Stomach (tissue), 19 donors: ENCODE measurements at regions of chr20 and their contacts with region 1.

Region 1: GRCh38 chr20:32779500-32780211 is 17.5 kb downstream of the DNMT3B start:
- DNase-seq: no peak
- H3K4me3 ChIP-seq: no peak overlapping the region
- H3K27ac ChIP-seq: no peak overlapping the region
- H3K4me1 ChIP-seq: peaks cover 8 to 16% (median 12%) of the 10 kb centered on the region in 4 donors
- H3K27me3 ChIP-seq: no peaks in the 10 kb centered on the region
- CTCF ChIP-seq: no peak
- EP300 ChIP-seq: no peak
- POLR2A ChIP-seq: no peak

Region 2: GRCh38 chr20:32674362-32674789 is 105.3 kb before region 1 on chr20:
- intact Hi-C with region 1: loop called (anchors 5 kb)
- DNase-seq: peak; percentile 56 to 66
- H3K4me3 ChIP-seq: no peak overlapping the region
- H3K27ac ChIP-seq: no peak overlapping the region
- H3K4me1 ChIP-seq: peaks cover 0 to 14% (median 3%) of the 10 kb centered on the region in 4 donors
- H3K27me3 ChIP-seq: no peaks in the 10 kb centered on the region
- CTCF ChIP-seq: peak in 5 of 7 experiments; percentile 21 to 57 (median 53)
- EP300 ChIP-seq: no peak
- POLR2A ChIP-seq: no peak